ENCODE measurements at regions of chr1 and their contacts with region 1.

Region 1: DNA sequence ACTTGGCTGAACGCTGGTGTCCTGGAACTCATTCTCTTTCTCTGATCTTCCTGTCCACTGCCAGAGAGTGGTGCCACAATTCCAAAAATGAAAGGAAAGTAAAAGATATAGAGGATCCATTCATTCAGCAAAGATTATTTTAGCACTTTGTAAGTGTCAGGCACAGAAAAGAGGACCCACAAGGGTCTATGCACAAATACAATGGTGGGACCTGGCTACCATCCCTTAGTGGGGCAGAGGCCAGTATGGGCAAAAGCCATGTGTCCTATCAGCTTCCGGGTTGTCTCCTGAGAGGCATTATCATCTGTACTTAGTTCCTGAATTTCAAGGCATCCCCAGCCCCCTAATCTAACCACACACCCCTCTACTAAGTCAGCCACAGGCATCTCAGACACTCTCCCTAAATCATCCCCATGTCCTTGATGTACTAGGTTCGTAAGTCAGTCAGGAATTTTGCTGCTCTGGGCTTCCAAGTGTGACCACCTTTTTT is 19.0 kb downstream of the SSR2 start:
- DNase-seq: no peak
- ATAC-seq: peak; percentile 66 to 86 (median 75)
- H3K4me3 ChIP-seq: no peak overlapping the region
- H3K27ac ChIP-seq: peak overlapping the region in 1 of 3 donors; percentile 33
- H3K4me1 ChIP-seq: peaks cover 0 to 16% (median 7%) of the 10 kb centered on the region in 4 donors
- H3K27me3 ChIP-seq: no peaks in the 10 kb centered on the region
- CTCF ChIP-seq: peak in 3 of 4 donors; percentile 11 to 24 (median 14)
- POLR2A ChIP-seq: no peak

Region 2: GRCh38 chr1:156033011-156033410 is 31.3 kb after region 1 on chr1:
- intact Hi-C with region 1: no loop called
- DNase-seq: no peak
- ATAC-seq: peak; percentile 37 to 71 (median 48)
- H3K4me3 ChIP-seq: no peak overlapping the region
- H3K27ac ChIP-seq: no peak overlapping the region
- H3K4me1 ChIP-seq: no peaks in the 10 kb centered on the region
- H3K27me3 ChIP-seq: no peaks in the 10 kb centered on the region
- CTCF ChIP-seq: no peak
- POLR2A ChIP-seq: no peak

Region 3: GRCh38 chr1:156054500-156055280 is 53.0 kb after region 1 on chr1 and contains the start of gene LAMTOR2:
- intact Hi-C with region 1: loop called in 1 of 2 experiments (anchors 10 kb)
- DNase-seq: peak; percentile 97 to 99 (median 98)
- ATAC-seq: peak; percentile 89 to 91 (median 90)
- H3K4me3 ChIP-seq: peak within 1 kb of the TSS; percentile 75 to 100 (median 89)
- H3K27ac ChIP-seq: peak within 1 kb of the TSS; percentile 79 to 88 (median 82)
- H3K4me1 ChIP-seq: peaks cover 0 to 7% (median 2%) of the 10 kb centered on the region in 4 donors
- H3K27me3 ChIP-seq: no peaks in the 10 kb centered on the region
- CTCF ChIP-seq: no peak
- POLR2A ChIP-seq: peak; percentile 61
- total RNA-seq, gene LAMTOR2: 49.4 to 71.0 (median 60.3) TPM

Region 4: DNA sequence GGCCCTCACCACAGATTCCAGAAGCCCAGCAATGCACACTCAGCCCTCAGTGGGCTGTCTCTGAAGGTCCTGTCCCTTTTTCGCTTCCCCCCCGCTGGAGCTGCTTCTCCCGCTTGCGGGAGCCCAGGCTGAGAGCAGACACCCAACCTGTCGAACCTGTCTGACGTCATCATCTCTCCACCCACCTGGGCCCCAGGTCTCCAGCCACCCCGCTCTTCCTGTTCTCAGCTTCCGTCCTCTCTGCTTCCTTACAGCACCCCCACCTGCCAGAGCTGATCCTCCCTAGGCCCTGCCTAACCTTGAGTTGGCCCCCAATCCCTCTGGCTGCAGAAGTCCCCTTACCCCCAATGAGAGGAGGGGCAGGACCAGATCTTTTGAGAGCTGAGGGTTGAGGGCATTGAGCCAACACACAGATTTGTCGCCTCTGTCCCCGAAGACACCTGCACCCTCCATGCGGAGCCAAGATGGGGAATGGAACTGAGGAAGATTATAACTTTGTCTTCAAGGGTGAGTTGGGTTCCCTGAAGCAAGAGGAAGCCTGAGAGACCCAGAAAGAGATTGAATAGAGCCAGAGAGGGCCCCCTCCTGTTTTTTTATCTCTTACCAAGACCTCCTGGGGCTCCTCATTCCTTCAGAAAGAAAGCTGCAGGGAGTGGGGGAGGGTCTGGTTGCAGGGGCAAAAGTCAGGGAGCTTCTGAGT is 59.4 kb after region 1 on chr1 and contains the start of gene RAB25:
- intact Hi-C with region 1: loop called (anchors 10 kb)
- DNase-seq: no peak
- ATAC-seq: peak in 1 of 4 donors; percentile 20
- H3K4me3 ChIP-seq: no peak within 1 kb of the TSS
- H3K27ac ChIP-seq: no peak within 1 kb of the TSS
- H3K4me1 ChIP-seq: no peaks in the 10 kb centered on the region
- H3K27me3 ChIP-seq: no peaks in the 10 kb centered on the region
- CTCF ChIP-seq: no peak
- POLR2A ChIP-seq: no peak
- total RNA-seq, gene RAB25: 0.40 to 3.2 (median 0.77) TPM